H1 (cell line): ENCODE measurements at regions of chr5 and their contacts with region 1.

Region 1: GRCh38 chr5:133895979-133896845 is 72.2 kb downstream of the C5orf15 start:
- DNase-seq: no peak
- H3K4me3 ChIP-seq: no peak overlapping the region
- H3K27ac ChIP-seq: no peak overlapping the region
- H3K4me1 ChIP-seq: no peaks in the 10 kb centered on the region
- H3K27me3 ChIP-seq: no peaks in the 10 kb centered on the region; a peak in 1 of 7 replicates
- CTCF ChIP-seq: no peak
- EP300 ChIP-seq: no peak
- POLR2A ChIP-seq: no peak
- RAD21 ChIP-seq: no peak

Region 2: GRCh38 chr5:133884569-133885311 is 11.5 kb before region 1 on chr5:
- CTCF ChIA-PET with region 1: interaction called, 15 read pairs
- POLR2A ChIA-PET with region 1: no interaction called
- DNase-seq: no peak
- H3K4me3 ChIP-seq: no peak overlapping the region
- H3K27ac ChIP-seq: no peak overlapping the region
- H3K4me1 ChIP-seq: peaks cover 0 to 2% (median 0%) of the 10 kb centered on the region in 4 experiments; a peak in 1 of 7 replicates
- H3K27me3 ChIP-seq: no peaks in the 10 kb centered on the region
- CTCF ChIP-seq: no peak
- EP300 ChIP-seq: no peak
- POLR2A ChIP-seq: no peak
- RAD21 ChIP-seq: no peak

Region 3: DNA sequence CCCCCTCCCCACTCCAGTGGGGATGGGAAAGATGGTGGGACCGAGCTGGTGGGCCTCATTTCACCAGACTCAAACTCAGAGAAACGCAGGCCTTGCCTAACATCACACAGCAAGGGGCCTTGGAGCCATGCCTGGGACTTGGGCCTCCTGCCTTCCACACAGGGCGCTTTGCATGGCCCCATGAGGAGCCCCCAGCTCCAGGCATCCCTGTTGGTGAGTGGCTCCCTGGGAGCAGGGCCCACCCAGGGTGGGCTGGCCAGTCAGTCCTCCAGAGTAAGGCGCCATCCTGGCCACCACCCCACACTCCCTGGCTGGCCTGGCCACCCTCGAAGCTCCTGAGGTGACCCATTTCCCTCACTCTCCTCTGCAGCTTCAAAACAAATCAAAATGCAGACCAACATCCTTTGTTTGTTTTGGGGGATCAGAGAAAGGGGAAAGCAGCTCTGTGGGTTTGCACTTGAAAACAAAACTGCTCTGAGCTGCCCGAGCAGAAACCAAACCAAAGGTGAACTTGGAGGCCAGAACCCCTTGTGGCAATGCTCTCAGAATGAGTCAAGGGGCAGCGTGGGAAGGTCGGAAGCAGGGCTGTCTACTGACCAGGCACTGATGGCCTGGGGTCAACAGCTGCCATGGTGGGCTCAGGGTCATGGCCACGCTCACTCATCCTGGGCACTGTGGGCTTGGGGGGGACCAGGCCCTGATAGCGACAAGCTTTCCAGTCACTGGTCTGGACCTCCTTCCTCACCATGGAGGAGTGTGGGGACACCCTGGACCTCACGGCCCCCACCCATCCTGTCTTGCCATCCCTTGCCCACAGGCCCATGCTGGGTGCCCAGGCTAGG is 145.6 kb after region 1 on chr5:
- CTCF ChIA-PET with region 1: no interaction called
- POLR2A ChIA-PET with region 1: no interaction called
- DNase-seq: no peak
- H3K4me3 ChIP-seq: no peak overlapping the region
- H3K27ac ChIP-seq: no peak overlapping the region
- H3K4me1 ChIP-seq: peaks cover 3 to 8% (median 4%) of the 10 kb centered on the region in 4 experiments; a peak in 6 of 7 replicates
- H3K27me3 ChIP-seq: peaks cover 0 to 3% (median under 1%) of the 10 kb centered on the region in 4 experiments; a peak in 3 of 7 replicates
- CTCF ChIP-seq: no peak
- EP300 ChIP-seq: no peak
- POLR2A ChIP-seq: no peak
- RAD21 ChIP-seq: no peak